Breast epithelium (tissue), 4 donors: ENCODE measurements at regions of chrX and their contacts with region 1.

Region 1: GRCh38 chrX:153179131-153179530 is at the start of gene MAGEA1:
- DNase-seq: no peak
- H3K4me3 ChIP-seq: no peak within 1 kb of the TSS
- H3K27ac ChIP-seq: no peak within 1 kb of the TSS
- H3K4me1 ChIP-seq: no peaks in the 10 kb centered on the region
- H3K27me3 ChIP-seq: peaks cover 0 to 48% of the 10 kb centered on the region in 2 donors
- CTCF ChIP-seq: no peak
- POLR2A ChIP-seq: no peak
- total RNA-seq, gene MAGEA1: not detected

Region 2: GRCh38 chrX:153216926-153217325 is 37.8 kb after region 1 on chrX:
- intact Hi-C with region 1: no loop called
- DNase-seq: no peak
- H3K4me3 ChIP-seq: no peak overlapping the region
- H3K27ac ChIP-seq: no peak overlapping the region
- H3K4me1 ChIP-seq: no peaks in the 10 kb centered on the region
- H3K27me3 ChIP-seq: peaks cover 0 to 45% of the 10 kb centered on the region in 2 donors
- CTCF ChIP-seq: no peak
- POLR2A ChIP-seq: no peak

Region 3: GRCh38 chrX:153511784-153512500 is 332.8 kb after region 1 on chrX:
- intact Hi-C with region 1: loop called (anchors 5 kb)
- DNase-seq: no peak
- H3K4me3 ChIP-seq: no peak overlapping the region
- H3K27ac ChIP-seq: no peak overlapping the region
- H3K4me1 ChIP-seq: no peaks in the 10 kb centered on the region
- H3K27me3 ChIP-seq: peaks cover 0 to 73% of the 10 kb centered on the region in 2 donors
- CTCF ChIP-seq: no peak
- POLR2A ChIP-seq: no peak